Activated CD4-positive, alpha-beta memory T cell treated with anti-CD3 and anti-CD28 coated beads, Interleukin-2, amount 10 ng/mL, durations not matched to agents 7 days and 5 days (primary cell): ENCODE measurements at regions of chr11 and their contacts with region 1.

Region 1: DNA sequence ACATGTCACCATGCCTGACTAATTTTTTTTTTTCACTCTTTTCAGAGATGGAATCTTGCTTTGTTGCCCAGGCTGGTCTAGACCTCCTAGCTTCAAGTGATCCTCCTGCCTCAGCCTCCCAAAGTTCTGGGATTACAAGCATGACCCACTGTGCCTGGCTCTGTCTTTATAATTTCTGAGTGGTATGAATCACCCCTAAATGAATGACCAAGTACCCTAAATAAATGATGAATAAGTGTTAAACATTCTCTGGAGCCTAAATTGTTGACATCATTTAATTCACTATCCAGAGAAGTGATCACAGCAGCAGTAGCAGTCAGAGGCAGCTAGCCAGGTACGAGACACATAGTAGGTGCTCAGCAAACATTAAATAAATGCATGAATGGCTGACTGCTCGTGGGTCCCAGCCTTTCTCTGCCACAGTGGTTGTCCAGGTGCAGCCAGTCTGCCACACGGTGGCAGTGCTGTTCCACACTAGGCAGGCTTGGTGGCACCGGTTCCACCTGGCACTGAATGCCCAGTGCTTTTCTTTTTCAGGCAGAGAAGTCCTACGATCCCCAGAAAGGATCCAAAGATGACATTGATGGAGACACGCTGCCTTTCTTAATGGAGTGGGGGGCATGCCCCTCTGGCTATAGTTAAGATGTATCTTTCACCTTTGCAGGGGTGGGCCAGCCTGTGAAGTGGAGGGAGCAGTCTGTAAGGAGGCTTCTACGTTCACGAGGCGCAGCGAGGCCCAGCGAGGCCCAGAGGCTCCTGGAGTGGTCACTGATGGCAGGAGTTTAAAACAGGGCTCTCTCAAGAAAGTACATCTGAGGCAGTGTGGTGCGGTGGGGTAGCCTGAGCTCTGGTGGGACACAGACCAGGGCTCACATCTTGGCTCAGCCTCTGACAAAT is 8.7 kb upstream of the TTC12 start:
- DNase-seq: peak; percentile 78
- H3K4me3 Mint-ChIP-seq: no peak overlapping the region
- H3K27ac Mint-ChIP-seq: no peak overlapping the region
- H3K4me1 Mint-ChIP-seq: no peaks in the 10 kb centered on the region
- H3K27me3 Mint-ChIP-seq: peaks cover 10% of the 10 kb centered on the region

Region 2: DNA sequence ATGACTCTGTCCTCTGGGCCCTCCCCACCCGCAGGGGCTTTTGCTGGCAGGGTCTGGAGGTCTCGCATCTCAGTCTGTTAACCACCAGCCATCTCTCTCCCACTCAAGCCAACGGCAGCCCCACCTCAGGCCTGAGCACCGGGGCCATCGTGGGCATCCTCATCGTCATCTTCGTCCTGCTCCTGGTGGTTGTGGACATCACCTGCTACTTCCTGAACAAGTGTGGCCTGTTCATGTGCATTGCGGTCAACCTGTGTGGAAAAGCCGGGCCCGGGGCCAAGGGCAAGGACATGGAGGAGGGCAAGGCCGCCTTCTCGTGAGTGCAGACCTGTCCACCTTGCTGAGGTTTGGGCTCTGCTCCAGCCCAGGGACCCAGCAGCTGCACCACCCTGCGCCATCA is 35.6 kb before region 1 on chr11:
- CTCF ChIA-PET with region 1: no interaction called
- POLR2A ChIA-PET with region 1: no interaction called
- DNase-seq: no peak
- H3K4me3 Mint-ChIP-seq: no peak overlapping the region
- H3K27ac Mint-ChIP-seq: no peak overlapping the region
- H3K4me1 Mint-ChIP-seq: no peaks in the 10 kb centered on the region
- H3K27me3 Mint-ChIP-seq: peaks cover 3% of the 10 kb centered on the region

Region 3: DNA sequence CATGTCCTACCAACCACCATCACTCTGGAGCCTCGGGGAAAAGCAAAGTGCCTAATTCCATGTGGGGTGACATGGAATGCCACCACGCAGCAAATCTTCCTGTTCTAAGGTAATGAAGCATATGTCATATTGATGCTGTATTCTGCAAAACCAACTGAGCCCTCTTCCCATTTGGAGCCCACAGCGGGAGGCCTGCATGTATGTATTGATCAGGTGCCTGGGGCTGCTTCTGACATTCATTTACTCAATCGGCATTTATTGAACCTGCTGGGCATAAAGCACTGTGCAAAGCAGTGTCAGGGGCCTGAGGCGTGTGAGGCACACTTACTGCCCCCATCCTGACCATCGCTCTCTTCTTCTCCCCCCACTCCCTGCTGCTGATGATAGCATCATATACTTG is 121.0 kb after region 1 on chr11:
- CTCF ChIA-PET with region 1: no interaction called
- POLR2A ChIA-PET with region 1: no interaction called
- DNase-seq: no peak
- H3K4me3 Mint-ChIP-seq: no peak overlapping the region
- H3K27ac Mint-ChIP-seq: no peak overlapping the region
- H3K4me1 Mint-ChIP-seq: no peaks in the 10 kb centered on the region
- H3K27me3 Mint-ChIP-seq: peaks cover 3% of the 10 kb centered on the region

Region 4: DNA sequence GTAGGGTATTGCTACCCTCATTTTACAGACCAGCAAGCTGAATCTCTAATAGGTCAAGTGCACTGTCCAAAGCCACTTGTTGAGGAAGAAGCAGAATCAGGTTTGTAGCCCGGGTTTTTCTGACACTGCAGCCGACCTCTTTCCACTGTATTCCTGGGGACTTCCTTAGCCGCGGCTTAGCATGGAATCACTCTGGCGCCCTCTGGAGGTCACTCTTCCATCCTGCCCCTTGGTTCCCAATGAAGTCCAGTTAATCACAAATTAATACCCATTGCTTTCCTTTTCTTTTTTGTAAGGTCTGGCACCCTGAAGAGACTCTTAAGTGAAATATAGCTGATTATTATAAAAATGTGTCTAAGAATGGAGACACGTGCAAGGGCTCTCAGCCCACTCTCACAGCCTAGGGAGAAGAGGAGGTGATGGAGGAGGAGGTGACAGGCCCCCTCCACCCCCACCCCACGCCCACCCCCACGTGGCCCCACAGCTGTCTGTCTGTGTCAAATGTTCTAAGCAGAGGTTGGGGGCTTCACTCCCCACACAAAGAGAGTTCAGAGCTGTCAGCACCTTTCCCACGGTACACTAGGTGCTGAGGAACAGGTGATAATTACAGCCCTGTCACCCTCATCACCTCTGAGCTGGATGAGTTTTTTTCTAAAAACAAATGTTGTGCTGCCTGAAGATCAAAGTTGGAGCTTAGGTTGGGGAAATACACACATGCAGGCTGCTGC is 227.2 kb after region 1 on chr11:
- CTCF ChIA-PET with region 1: interaction called, 12 read pairs
- POLR2A ChIA-PET with region 1: no interaction called
- DNase-seq: peak; percentile 57
- H3K4me3 Mint-ChIP-seq: no peak overlapping the region
- H3K27ac Mint-ChIP-seq: no peak overlapping the region
- H3K4me1 Mint-ChIP-seq: no peaks in the 10 kb centered on the region
- H3K27me3 Mint-ChIP-seq: peaks cover 30% of the 10 kb centered on the region